AG04449 (cell line): ENCODE measurements at regions of chr20 and their contacts with region 1.

Region 1: GRCh38 chr20:41524980-41525613 is 93.1 kb downstream of the CHD6 start:
- DNase-seq: no peak
- H3K4me3 ChIP-seq: no peak overlapping the region
- CTCF ChIP-seq: no peak

Region 2: GRCh38 chr20:41275301-41275731 is 249.8 kb before region 1 on chr20:
- CTCF ChIA-PET with region 1: no interaction called
- POLR2A ChIA-PET with region 1: no interaction called
- DNase-seq: no peak
- H3K4me3 ChIP-seq: no peak overlapping the region
- CTCF ChIP-seq: no peak

Region 3: GRCh38 chr20:41510847-41511450 is 14.1 kb before region 1 on chr20:
- CTCF ChIA-PET with region 1: interaction called, 10 read pairs
- POLR2A ChIA-PET with region 1: no interaction called
- DNase-seq: no peak
- H3K4me3 ChIP-seq: no peak overlapping the region
- CTCF ChIP-seq: no peak

Region 4: DNA sequence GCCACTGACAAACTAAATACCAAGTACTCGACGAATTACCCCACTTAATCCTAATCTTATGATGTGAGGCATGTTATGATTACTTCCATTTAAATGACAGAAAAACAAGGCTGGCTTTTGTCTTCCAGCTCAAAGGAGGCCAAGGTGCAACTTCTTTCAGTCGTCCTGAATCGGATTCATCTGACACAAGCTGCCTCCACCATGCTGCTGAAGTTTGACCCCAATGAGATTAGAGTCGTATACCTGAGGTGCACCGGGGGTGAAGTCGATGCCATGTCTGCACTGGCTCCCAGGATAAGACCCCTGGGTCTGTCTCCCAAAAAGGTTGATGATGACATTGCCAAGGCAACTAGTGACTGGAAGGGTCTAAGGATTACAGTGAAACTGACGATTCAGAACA is 22.1 kb after region 1 on chr20:
- CTCF ChIA-PET with region 1: no interaction called
- POLR2A ChIA-PET with region 1: no interaction called
- DNase-seq: no peak
- H3K4me3 ChIP-seq: no peak overlapping the region
- CTCF ChIP-seq: no peak